ENCODE measurements at regions of chr2 and their contacts with region 1.

Region 1: DNA sequence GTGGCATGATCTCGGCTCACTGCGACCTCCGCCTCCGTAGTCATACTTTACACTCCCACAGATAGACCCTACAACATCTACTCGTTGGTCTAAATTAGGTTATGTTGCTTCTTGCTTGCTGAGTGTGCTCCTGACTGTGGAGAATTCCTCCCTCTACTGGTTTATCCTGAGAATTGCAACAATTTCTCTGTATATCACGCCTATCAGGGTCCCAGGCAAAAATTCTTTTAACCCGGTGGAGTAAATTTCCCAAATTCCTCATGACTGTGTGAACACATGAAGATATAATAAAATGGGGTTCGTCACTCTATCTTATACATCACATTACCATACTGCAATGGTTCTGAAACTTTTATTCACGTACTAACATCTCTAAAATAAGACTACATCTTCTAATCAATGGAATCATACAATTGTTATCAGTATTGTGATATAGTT is 156.7 kb downstream of the EVA1A start:
- DNase-seq: peak in 8 of 42 donors; percentile 2 to 39 (median 18)

Region 2: DNA sequence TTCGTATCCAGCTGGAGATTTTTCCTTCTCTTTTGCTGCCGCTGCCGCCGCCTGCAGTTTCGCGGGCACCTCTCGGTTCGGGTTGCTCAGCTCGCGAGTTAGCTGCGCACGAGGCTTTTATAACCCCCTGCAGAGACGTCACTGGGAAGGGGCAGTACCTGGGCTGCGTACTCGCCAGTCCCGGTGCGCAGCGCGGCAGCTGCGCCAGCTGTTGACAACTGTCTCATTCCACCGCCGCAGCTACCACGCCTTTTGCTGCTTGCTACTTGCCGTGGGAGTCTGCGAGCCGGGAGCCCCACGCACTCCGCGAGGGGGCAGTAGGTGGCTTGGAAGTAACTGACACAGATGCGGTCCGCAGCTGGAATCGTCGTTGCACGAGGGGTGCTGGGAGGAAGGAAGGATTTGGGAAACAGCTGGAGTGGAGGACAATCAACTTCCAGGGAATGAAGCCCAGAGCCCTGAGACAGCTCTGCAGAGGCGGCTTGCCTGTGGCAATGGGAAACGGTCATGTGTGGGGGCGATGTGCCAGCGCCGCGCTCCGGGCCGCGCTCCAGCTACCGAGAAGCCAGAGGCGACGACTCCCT is 204.5 kb before region 1 on chr2 and contains the start of gene TACR1:
- intact Hi-C with region 1: loop called (anchors 5 kb)
- DNase-seq: peak; percentile 52 to 88 (median 77)